ENCODE measurements at regions of chr4 and their contacts with region 1.

Region 1: GRCh38 chr4:47349326-47349725 is 114.2 kb downstream of the COMMD8 start:
- DNase-seq: peak; percentile 41
- H3K4me3 ChIP-seq: no peak overlapping the region
- H3K27ac ChIP-seq: peak overlapping the region; percentile 59
- H3K27me3 ChIP-seq: no peaks in the 10 kb centered on the region
- CTCF ChIP-seq: no peak

Region 2: DNA sequence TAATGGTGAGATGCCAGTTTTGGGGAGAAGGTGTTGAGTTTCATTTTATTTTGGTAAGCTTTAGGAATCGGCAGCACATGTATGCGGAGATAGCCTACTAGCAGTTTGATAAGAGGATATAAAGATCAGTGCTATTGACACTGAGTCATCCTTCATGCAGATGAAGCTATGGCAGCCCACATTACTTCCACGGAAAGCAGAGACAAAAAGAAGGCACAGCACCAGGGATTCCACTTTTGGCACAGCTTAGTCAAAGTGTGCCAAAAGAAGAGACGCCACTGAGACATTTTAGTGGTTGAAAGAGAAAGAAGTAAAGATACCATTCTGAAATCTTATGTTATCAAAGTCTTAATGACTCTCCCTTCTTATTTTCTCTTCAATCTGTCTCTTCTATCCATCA is 214.1 kb before region 1 on chr4:
- CTCF ChIA-PET with region 1: interaction called, 11 read pairs
- POLR2A ChIA-PET with region 1: no interaction called
- DNase-seq: no peak
- H3K4me3 ChIP-seq: no peak overlapping the region
- H3K27ac ChIP-seq: no peak overlapping the region
- H3K27me3 ChIP-seq: no peaks in the 10 kb centered on the region
- CTCF ChIP-seq: no peak

Measured in AG04450 (cell line).